Naive thymus-derived CD4-positive, alpha-beta T cell (primary cell): ENCODE measurements at regions of chr1 and their contacts with region 1.

Region 1: DNA sequence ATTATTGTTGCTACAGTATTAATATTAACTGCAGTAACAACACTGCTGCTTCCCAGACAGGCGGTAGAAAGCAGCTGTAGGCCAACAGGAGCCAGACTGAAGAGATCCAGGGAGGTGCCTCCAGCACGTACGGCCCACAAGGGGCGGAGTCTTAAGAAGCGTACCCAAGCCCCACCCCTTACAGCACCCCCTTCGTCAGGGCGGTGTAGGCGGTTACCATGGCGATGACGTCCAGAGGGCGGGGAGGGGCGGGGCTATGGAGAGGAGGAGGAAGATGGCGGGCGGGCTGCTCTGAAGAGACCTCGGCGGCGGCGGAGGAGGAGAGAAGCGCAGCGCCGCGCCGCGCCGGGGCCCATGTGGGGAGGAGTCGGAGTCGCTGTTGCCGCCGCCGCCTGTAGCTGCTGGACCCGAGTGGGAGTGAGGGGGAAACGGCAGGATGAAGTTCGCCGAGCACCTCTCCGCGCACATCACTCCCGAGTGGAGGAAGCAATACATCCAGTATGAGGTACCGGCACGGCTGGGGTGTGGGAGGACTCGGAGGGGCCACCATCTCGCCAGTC is at the start of gene XPR1:
- DNase-seq: peak; percentile 80 to 99 (median 96)
- ATAC-seq: peak; percentile 99
- H3K4me3 ChIP-seq: peak within 1 kb of the TSS; percentile 85
- H3K4me3 Mint-ChIP-seq: no peak within 1 kb of the TSS
- H3K27ac ChIP-seq: peak within 1 kb of the TSS; percentile 94
- H3K27ac Mint-ChIP-seq: peak within 1 kb of the TSS in 5 of 9 donors; percentile 91 to 95 (median 93)
- H3K4me1 ChIP-seq: peaks cover 12 to 16% of the 10 kb centered on the region in 2 donors
- H3K4me1 Mint-ChIP-seq: peaks cover 0 to 19% (median 13%) of the 10 kb centered on the region in 7 donors
- H3K27me3 ChIP-seq: no peaks in the 10 kb centered on the region
- H3K27me3 Mint-ChIP-seq: peaks cover 0 to 10% (median 5%) of the 10 kb centered on the region in 5 donors
- total RNA-seq, gene XPR1: 12.9 to 19.7 (median 15.4) TPM

Region 2: GRCh38 chr1:179025125-179025974 is 1606.5 kb before region 1 on chr1 and contains the start of gene FAM20B:
- CTCF ChIA-PET with region 1: no interaction called
- POLR2A ChIA-PET with region 1: no interaction called
- intact Hi-C with region 1: loop called in 1 of 2 experiments (anchors 2 kb)
- DNase-seq: peak; percentile 80 to 89 (median 86)
- ATAC-seq: peak; percentile 95
- H3K4me3 ChIP-seq: peak within 1 kb of the TSS; percentile 71
- H3K4me3 Mint-ChIP-seq: peak within 1 kb of the TSS; percentile 87 to 98 (median 91)
- H3K27ac ChIP-seq: peak within 1 kb of the TSS; percentile 84
- H3K27ac Mint-ChIP-seq: peak within 1 kb of the TSS; percentile 86 to 92 (median 89)
- H3K4me1 ChIP-seq: peaks cover 10 to 17% of the 10 kb centered on the region in 2 donors
- H3K4me1 Mint-ChIP-seq: peaks cover 35 to 60% (median 50%) of the 10 kb centered on the region in 7 donors
- H3K27me3 ChIP-seq: no peaks in the 10 kb centered on the region
- H3K27me3 Mint-ChIP-seq: peaks cover 0 to 31% (median 0%) of the 10 kb centered on the region in 5 donors
- total RNA-seq, gene FAM20B: 14.3 to 27.9 (median 25.2) TPM

Region 3: GRCh38 chr1:179882243-179883039 is 749.4 kb before region 1 on chr1 and contains the start of gene TOR1AIP1:
- CTCF ChIA-PET with region 1: no interaction called
- POLR2A ChIA-PET with region 1: no interaction called
- intact Hi-C with region 1: loop called (anchors 1 to 5 kb)
- DNase-seq: peak; percentile 91 to 98 (median 98)
- ATAC-seq: peak; percentile 87
- H3K4me3 ChIP-seq: peak within 1 kb of the TSS; percentile 96
- H3K4me3 Mint-ChIP-seq: peak within 1 kb of the TSS; percentile 93 to 99 (median 97)
- H3K27ac ChIP-seq: peak within 1 kb of the TSS; percentile 98
- H3K27ac Mint-ChIP-seq: peak within 1 kb of the TSS; percentile 99 to 100 (median 100)
- H3K4me1 ChIP-seq: peaks cover 27 to 37% of the 10 kb centered on the region in 2 donors
- H3K4me1 Mint-ChIP-seq: peaks cover 27 to 79% (median 63%) of the 10 kb centered on the region in 7 donors
- H3K27me3 ChIP-seq: no peaks in the 10 kb centered on the region
- H3K27me3 Mint-ChIP-seq: no peaks in the 10 kb centered on the region
- total RNA-seq, gene TOR1AIP1: 47.4 to 88.6 (median 59.5) TPM

Region 4: DNA sequence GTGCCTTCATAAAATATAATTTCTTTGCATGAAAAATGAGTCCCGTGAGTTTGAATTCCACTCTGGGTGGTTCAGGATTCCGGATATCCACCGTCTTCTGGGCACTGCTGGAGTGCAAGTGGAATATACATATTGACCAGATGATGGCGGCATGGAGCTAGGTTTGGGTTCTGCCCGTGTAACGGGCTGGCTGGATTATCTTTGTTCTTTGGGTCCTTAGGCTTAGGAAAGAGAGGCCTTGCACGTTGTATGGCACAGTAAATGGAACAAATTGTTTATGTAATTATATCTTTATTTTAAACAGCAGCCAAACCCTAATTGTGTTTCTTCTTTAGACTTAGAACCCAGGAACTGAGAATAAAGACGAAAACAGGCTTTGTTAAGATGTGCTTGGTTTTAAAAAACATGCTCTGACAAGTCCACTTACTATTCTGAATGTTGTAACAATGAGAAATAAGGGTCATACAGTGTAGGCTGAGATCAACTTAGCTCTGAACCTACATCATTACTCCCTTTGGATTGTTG is 115.9 kb before region 1 on chr1:
- CTCF ChIA-PET with region 1: no interaction called
- POLR2A ChIA-PET with region 1: interaction called, 3 read pairs
- intact Hi-C with region 1: loop called in 1 of 2 experiments (anchors 5 kb)
- DNase-seq: peak in 8 of 9 donors; percentile 33 to 65 (median 53)
- ATAC-seq: peak; percentile 94
- H3K4me3 ChIP-seq: no peak overlapping the region
- H3K4me3 Mint-ChIP-seq: no peak overlapping the region
- H3K27ac ChIP-seq: no peak overlapping the region
- H3K27ac Mint-ChIP-seq: no peak overlapping the region
- H3K4me1 ChIP-seq: no peaks in the 10 kb centered on the region
- H3K4me1 Mint-ChIP-seq: peaks cover 0 to 3% (median 0%) of the 10 kb centered on the region in 7 donors
- H3K27me3 ChIP-seq: no peaks in the 10 kb centered on the region
- H3K27me3 Mint-ChIP-seq: peaks cover 0 to 13% (median 10%) of the 10 kb centered on the region in 5 donors

Region 5: GRCh38 chr1:180611016-180611930 is 20.6 kb before region 1 on chr1:
- CTCF ChIA-PET with region 1: no interaction called
- POLR2A ChIA-PET with region 1: no interaction called
- intact Hi-C with region 1: no loop called
- DNase-seq: peak in 2 of 9 donors; percentile 13 to 16
- ATAC-seq: peak; percentile 62
- H3K4me3 ChIP-seq: no peak overlapping the region
- H3K4me3 Mint-ChIP-seq: peak overlapping the region in 2 of 10 donors; percentile 32 to 35
- H3K27ac ChIP-seq: no peak overlapping the region
- H3K27ac Mint-ChIP-seq: peak overlapping the region in 4 of 9 donors; percentile 1 to 58 (median 9)
- H3K4me1 ChIP-seq: no peaks in the 10 kb centered on the region
- H3K4me1 Mint-ChIP-seq: peaks cover 6 to 13% (median 11%) of the 10 kb centered on the region in 7 donors
- H3K27me3 ChIP-seq: no peaks in the 10 kb centered on the region
- H3K27me3 Mint-ChIP-seq: no peaks in the 10 kb centered on the region

Region 6: GRCh38 chr1:180863158-180863775 is 231.4 kb after region 1 on chr1:
- CTCF ChIA-PET with region 1: no interaction called
- POLR2A ChIA-PET with region 1: no interaction called
- intact Hi-C with region 1: loop called (anchors 5 kb)
- DNase-seq: peak in 6 of 9 donors; percentile 8 to 51 (median 36)
- ATAC-seq: peak; percentile 36
- H3K4me3 ChIP-seq: no peak overlapping the region
- H3K4me3 Mint-ChIP-seq: no peak overlapping the region
- H3K27ac ChIP-seq: no peak overlapping the region
- H3K27ac Mint-ChIP-seq: no peak overlapping the region
- H3K4me1 ChIP-seq: no peaks in the 10 kb centered on the region
- H3K4me1 Mint-ChIP-seq: no peaks in the 10 kb centered on the region
- H3K27me3 ChIP-seq: no peaks in the 10 kb centered on the region
- H3K27me3 Mint-ChIP-seq: no peaks in the 10 kb centered on the region

Region 7: GRCh38 chr1:181088079-181089016 is 456.5 kb after region 1 on chr1 and contains the start of gene IER5:
- CTCF ChIA-PET with region 1: no interaction called
- POLR2A ChIA-PET with region 1: no interaction called
- intact Hi-C with region 1: loop called (anchors 1 to 2 kb)
- DNase-seq: peak; percentile 86 to 97 (median 92)
- ATAC-seq: peak; percentile 82
- H3K4me3 ChIP-seq: peak within 1 kb of the TSS; percentile 83
- H3K4me3 Mint-ChIP-seq: peak within 1 kb of the TSS; percentile 89 to 100 (median 99)
- H3K27ac ChIP-seq: peak within 1 kb of the TSS; percentile 98
- H3K27ac Mint-ChIP-seq: peak within 1 kb of the TSS; percentile 92 to 98 (median 97)
- H3K4me1 ChIP-seq: peaks cover 12 to 23% of the 10 kb centered on the region in 2 donors
- H3K4me1 Mint-ChIP-seq: peaks cover 25 to 56% (median 46%) of the 10 kb centered on the region in 7 donors
- H3K27me3 ChIP-seq: no peaks in the 10 kb centered on the region
- H3K27me3 Mint-ChIP-seq: peaks cover 0 to 9% (median 0%) of the 10 kb centered on the region in 5 donors
- total RNA-seq, gene IER5: 12.7 to 86.9 (median 46.0) TPM

Region 8: DNA sequence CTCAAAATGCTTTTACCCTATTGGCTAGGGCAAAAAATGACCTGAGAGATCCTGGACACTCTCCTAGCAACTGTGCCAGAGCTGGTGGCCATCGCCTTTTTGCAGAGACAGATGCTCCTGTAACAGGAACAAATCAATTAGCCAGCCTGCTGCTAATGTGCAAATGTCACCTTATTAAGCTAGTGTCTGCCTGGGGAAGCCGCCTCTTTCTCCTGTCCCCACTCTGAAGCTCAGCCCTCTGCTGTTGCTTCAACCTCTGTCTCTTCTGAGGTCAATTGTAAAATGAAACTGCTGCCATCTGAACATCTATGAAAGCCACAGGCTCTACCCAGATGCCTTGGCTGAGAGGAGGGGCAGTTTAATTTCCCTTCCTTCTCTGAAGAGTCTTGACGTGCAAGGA is 766.0 kb after region 1 on chr1:
- CTCF ChIA-PET with region 1: no interaction called
- POLR2A ChIA-PET with region 1: no interaction called
- intact Hi-C with region 1: loop called in 1 of 2 experiments (anchors 5 kb)
- DNase-seq: peak in 7 of 9 donors; percentile 24 to 57 (median 45)
- ATAC-seq: peak; percentile 47
- H3K4me3 ChIP-seq: peak overlapping the region; percentile 22
- H3K4me3 Mint-ChIP-seq: peak overlapping the region in 8 of 10 donors; percentile 57 to 82 (median 74)
- H3K27ac ChIP-seq: peak overlapping the region; percentile 62
- H3K27ac Mint-ChIP-seq: peak overlapping the region in 2 of 9 donors; percentile 83 to 94
- H3K4me1 ChIP-seq: peaks cover 41 to 77% of the 10 kb centered on the region in 2 donors
- H3K4me1 Mint-ChIP-seq: peaks cover 26 to 45% (median 41%) of the 10 kb centered on the region in 7 donors
- H3K27me3 ChIP-seq: no peaks in the 10 kb centered on the region
- H3K27me3 Mint-ChIP-seq: no peaks in the 10 kb centered on the region